Activated CD4-positive, alpha-beta memory T cell treated with anti-CD3 and anti-CD28 coated beads for 36 hours (primary cell): ENCODE measurements at regions of chr3 and their contacts with region 1.

Region 1: DNA sequence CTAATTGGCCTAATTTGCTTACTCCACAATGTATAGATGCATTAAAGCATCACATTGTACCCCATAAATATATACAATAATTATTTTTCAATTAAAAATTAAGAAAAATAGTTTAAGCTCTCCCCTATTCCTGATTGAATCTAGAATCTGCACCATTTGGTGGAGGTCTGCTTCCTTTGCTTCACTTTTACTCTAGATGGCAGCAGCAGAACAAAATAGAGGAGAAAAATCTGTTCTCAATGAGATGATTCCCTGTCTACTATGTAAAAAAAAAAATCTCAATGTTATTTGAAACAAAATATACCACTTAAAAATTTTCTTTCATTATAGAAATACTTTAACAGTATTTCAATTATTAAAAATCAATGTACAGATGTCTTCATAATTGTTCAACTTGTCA is 109.6 kb upstream of the FXR1 start:
- DNase-seq: no peak
- H3K4me3 Mint-ChIP-seq: no peak overlapping the region
- H3K27ac Mint-ChIP-seq: no peak overlapping the region
- H3K4me1 Mint-ChIP-seq: no peaks in the 10 kb centered on the region
- H3K27me3 Mint-ChIP-seq: peaks cover 1% of the 10 kb centered on the region

Region 2: DNA sequence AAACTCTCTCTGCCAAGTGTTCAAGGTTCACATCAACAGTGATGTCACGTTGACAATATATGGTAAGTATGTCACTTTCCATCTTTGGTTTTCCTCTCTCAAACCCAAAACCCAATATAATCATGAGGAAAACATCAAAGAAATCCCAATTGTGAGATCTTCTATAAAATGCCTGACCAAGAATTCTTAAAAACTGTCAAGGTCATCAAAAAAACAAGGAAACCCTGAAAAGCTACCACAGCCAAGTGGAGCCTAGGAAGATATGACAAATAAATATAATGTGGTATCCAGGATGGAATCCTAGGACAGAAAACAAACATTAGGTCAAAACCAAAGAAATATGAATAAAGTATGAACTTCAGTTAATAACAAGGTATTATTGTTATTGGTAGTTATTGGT is 38.4 kb before region 1 on chr3:
- CTCF ChIA-PET with region 1: no interaction called
- POLR2A ChIA-PET with region 1: no interaction called
- intact Hi-C with region 1: no loop called
- DNase-seq: no peak
- H3K4me3 Mint-ChIP-seq: no peak overlapping the region
- H3K27ac Mint-ChIP-seq: no peak overlapping the region
- H3K4me1 Mint-ChIP-seq: no peaks in the 10 kb centered on the region
- H3K27me3 Mint-ChIP-seq: peaks cover 3% of the 10 kb centered on the region

Region 3: GRCh38 chr3:181176601-181177000 is 373.8 kb after region 1 on chr3:
- CTCF ChIA-PET with region 1: no interaction called
- POLR2A ChIA-PET with region 1: no interaction called
- intact Hi-C with region 1: loop called (anchors 5 kb)
- DNase-seq: peak; percentile 34
- H3K4me3 Mint-ChIP-seq: no peak overlapping the region
- H3K27ac Mint-ChIP-seq: no peak overlapping the region
- H3K4me1 Mint-ChIP-seq: no peaks in the 10 kb centered on the region
- H3K27me3 Mint-ChIP-seq: no peaks in the 10 kb centered on the region